Heart right ventricle (tissue), 16 donors: ENCODE measurements at regions of chr5 and their contacts with region 1.

Region 1: DNA sequence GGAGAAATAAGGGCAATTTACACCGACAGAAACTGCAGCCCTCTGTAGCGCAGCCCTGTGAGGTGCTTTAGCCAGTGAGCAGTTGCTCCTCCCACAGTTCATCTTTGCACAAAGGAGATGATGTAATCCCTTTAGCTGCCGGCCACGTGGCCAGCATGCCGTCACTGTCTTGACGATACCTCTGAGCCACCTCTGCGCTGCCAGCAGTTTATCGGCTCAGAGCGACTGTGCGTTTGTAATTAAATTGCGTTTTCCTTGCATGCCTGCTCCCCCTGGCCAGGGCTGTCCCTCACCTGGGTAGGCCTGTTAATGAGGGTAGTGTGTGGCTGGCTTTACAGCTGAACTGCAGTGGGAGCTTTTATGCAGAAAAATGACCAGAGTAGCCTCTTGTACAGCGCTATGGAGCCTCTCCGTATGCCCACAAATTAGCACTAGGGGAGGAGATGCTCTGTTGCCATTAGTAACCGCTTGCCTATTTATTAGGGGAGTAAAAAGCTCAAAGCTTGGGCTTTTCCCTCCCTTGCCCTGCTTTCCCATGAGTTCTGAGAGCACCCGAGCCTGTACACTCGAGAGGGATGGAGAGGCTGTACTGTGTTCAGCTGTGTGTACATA is 107.0 kb downstream of the TRIO start:
- DNase-seq: peak; percentile 55 to 64
- ATAC-seq: peak; percentile 66 to 91 (median 88)
- H3K4me3 ChIP-seq: peak overlapping the region in 5 of 10 donors; percentile 6 to 33 (median 13)
- H3K27ac ChIP-seq: peak overlapping the region; percentile 39 to 75 (median 66)
- H3K4me1 ChIP-seq: peaks cover 12 to 91% (median 69%) of the 10 kb centered on the region in 9 donors
- H3K27me3 ChIP-seq: no peaks in the 10 kb centered on the region
- CTCF ChIP-seq: no peak

Region 2: DNA sequence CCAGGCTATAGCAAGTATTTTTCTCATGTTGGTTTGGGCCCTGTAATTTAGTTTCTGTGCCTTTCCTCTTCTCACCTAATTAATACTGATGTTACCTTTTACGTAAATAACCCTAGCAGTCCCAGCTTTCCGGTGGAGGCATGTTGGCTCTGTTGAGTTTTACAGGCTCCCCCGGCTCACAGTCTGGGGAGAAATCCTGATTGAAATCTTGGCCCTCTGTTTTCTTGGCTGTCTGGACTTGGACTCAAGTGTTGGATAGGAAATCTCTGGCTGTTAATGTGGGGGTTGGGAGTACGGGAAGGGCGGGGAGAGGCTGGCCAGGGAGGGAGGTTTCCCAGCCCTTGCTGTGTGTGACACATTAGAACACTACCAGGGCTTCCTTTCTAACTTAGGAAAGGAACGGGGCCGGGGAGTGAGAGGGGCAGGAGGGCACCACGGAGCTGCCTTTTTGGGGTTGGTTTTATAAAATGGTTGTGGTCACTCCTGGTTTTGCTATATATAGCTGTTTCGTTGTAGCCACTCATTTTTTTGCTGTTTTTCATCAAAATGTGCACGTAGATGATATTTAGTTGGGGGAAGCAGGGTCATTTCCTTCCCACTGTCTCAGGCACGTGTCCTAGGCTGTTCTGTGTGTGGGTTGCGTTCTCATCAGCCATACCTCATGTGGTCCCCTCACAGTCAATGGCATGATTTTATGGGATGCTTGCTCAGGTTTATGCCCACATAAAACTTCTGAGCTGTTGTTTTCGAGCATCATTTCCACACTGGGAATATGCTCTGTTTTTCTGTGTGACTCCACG is 96.1 kb before region 1 on chr5:
- intact Hi-C with region 1: loop called in 2 of 10 experiments (anchors 5 kb)
- DNase-seq: peak; percentile 69 to 86
- ATAC-seq: peak; percentile 90 to 96 (median 94)
- H3K4me3 ChIP-seq: peak overlapping the region in 7 of 10 donors; percentile 12 to 31 (median 25)
- H3K27ac ChIP-seq: peak overlapping the region in 9 of 10 donors; percentile 60 to 85 (median 74)
- H3K4me1 ChIP-seq: peaks cover 11 to 84% (median 64%) of the 10 kb centered on the region in 9 donors
- H3K27me3 ChIP-seq: no peaks in the 10 kb centered on the region
- CTCF ChIP-seq: no peak

Region 3: GRCh38 chr5:14208071-14209021 is 41.8 kb before region 1 on chr5:
- intact Hi-C with region 1: loop called in 1 of 10 experiments (anchors 10 kb)
- DNase-seq: no peak
- ATAC-seq: peak in 3 of 8 donors; percentile 24 to 34 (median 32)
- H3K4me3 ChIP-seq: no peak overlapping the region
- H3K27ac ChIP-seq: peak overlapping the region in 1 of 10 donors; percentile 51
- H3K4me1 ChIP-seq: peaks cover 0 to 87% (median 64%) of the 10 kb centered on the region in 9 donors
- H3K27me3 ChIP-seq: no peaks in the 10 kb centered on the region
- CTCF ChIP-seq: no peak